BJ (cell line): ENCODE measurements at regions of chr4 and their contacts with region 1.

Region 1: DNA sequence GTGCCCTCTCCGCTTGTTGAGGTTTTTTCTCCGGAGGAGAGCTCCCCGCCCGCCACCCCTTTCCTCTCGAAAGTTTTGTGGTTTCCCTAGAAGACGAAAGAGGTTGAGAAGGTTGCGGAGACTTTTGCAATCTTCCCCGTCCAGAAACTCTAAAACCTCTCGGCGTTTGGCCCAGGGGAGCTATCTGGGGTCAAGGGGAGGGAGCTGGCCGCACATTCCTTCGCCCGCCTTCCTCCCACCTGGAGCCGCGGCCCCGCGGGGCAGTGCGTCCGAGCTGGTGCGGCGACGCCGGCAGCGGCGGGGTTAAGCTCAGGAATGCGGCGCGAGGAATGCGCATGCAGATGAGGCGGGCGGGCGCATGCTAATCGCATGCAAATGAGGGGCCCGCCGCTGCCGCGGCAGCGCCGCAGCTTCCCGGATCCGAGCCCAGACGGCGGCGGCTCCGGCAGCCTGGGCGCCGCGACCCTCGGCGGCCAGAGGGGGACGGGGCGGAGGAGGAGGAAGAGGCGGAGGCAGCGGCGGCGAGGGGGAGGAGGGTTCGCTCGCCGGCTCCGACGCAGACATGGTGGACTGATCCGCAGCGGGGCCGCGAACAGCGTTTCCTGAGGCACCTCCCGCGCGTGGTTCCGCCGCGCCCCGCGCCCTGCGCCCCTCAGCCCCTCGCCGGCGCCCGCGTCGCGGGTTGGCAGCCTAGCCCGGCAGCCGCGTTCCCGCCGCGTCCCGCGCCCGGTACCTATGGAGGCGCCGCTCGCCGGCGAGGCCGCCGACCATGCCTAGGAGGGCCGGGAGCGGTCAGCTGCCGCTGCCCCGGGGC is at the start of gene WWC2:
- DNase-seq: peak; percentile 55
- H3K4me3 ChIP-seq: peak within 1 kb of the TSS; percentile 95
- H3K27me3 ChIP-seq: no peaks in the 10 kb centered on the region
- CTCF ChIP-seq: no peak
- polyA plus RNA-seq, gene WWC2: 32.0 and 36.8 TPM in 2 replicates

Region 2: GRCh38 chr4:183130328-183131173 is 31.6 kb after region 1 on chr4:
- CTCF ChIA-PET with region 1: no interaction called
- POLR2A ChIA-PET with region 1: no interaction called
- DNase-seq: no peak
- H3K4me3 ChIP-seq: no peak overlapping the region
- H3K27me3 ChIP-seq: no peaks in the 10 kb centered on the region
- CTCF ChIP-seq: no peak

Region 3: DNA sequence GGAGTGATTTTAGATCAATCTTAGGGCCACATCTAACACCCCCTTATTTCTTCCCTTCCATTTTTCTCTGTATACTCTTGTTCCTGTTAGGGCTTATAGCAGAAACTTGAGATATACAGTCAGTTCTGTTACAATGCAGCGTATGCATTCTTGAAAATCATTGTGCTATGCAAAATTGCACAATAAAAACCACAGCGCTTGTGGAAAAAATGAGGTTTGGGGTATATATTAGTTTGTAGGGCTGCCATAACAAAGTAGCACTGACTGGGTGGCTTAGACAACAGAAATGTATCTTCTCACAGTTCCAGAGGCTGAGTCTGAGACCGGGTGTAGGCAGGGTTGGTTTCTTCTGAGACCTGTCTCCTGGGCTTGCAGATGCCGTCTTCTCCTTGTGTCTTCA is 59.1 kb after region 1 on chr4:
- CTCF ChIA-PET with region 1: no interaction called
- POLR2A ChIA-PET with region 1: interaction called, 18 read pairs
- DNase-seq: no peak
- H3K4me3 ChIP-seq: no peak overlapping the region
- H3K27me3 ChIP-seq: no peaks in the 10 kb centered on the region
- CTCF ChIP-seq: no peak

Region 4: DNA sequence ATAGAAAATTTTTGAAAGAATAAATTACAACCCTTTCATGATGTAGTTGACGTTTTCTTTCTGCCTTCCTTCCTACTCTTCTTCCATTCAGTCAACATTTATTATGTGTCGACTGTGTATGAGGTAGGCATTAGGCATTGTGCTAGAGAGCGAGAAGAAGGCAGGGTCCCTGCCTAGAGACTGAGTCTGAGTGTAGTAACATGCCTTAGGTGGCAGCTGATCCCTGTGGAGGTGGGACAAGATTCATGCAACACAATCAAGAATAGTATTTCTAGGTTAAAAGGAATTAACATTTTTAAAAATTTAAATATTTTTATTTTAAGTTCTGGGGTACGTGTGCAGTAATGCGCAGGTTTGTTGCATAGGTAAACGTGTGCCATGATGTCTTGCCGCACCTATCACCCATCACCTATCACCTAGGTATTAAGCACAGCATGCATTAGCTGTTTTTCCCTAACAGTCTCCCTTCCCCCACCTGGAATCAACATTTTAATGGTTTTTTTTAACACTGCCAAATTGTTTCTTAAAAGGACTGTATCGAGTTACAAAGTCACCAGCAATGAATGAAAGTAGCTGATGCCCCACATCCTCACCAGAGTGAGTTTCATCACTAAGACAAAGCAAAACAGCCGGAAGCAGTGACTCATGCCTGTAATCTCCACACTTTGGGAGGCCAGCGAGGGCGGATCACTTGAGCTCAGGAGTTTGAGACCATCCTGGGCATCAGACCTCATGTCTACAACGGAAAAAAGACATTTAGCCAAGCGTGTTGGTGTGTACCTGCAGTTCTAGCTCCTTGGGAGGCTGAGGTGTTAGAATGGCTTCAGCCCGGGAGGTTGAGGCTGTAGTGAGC is 84.2 kb after region 1 on chr4:
- CTCF ChIA-PET with region 1: interaction called, 4 read pairs
- POLR2A ChIA-PET with region 1: interaction called, 12 read pairs
- DNase-seq: peak; percentile 41
- H3K4me3 ChIP-seq: no peak overlapping the region
- H3K27me3 ChIP-seq: no peaks in the 10 kb centered on the region
- CTCF ChIP-seq: no peak

Region 5: GRCh38 chr4:183256756-183257385 is 157.9 kb after region 1 on chr4:
- CTCF ChIA-PET with region 1: interaction called, 19 read pairs
- POLR2A ChIA-PET with region 1: interaction called, 6 read pairs
- DNase-seq: no peak
- H3K4me3 ChIP-seq: no peak overlapping the region
- H3K27me3 ChIP-seq: no peaks in the 10 kb centered on the region
- CTCF ChIP-seq: peak; percentile 88